Sciatic nerve (tissue), 2 donors: ENCODE measurements at regions of chr7 and their contacts with region 1.

Region 1: GRCh38 chr7:73667344-73668102 is at the start of gene VPS37D:
- DNase-seq: peak; percentile 96
- ATAC-seq: peak; percentile 96
- total RNA-seq, gene VPS37D: 4.5 TPM

Region 2: GRCh38 chr7:73612598-73613269 is 54.8 kb before region 1 on chr7:
- intact Hi-C with region 1: loop called (anchors 5 kb)
- DNase-seq: no peak
- ATAC-seq: peak; percentile 19

Region 3: DNA sequence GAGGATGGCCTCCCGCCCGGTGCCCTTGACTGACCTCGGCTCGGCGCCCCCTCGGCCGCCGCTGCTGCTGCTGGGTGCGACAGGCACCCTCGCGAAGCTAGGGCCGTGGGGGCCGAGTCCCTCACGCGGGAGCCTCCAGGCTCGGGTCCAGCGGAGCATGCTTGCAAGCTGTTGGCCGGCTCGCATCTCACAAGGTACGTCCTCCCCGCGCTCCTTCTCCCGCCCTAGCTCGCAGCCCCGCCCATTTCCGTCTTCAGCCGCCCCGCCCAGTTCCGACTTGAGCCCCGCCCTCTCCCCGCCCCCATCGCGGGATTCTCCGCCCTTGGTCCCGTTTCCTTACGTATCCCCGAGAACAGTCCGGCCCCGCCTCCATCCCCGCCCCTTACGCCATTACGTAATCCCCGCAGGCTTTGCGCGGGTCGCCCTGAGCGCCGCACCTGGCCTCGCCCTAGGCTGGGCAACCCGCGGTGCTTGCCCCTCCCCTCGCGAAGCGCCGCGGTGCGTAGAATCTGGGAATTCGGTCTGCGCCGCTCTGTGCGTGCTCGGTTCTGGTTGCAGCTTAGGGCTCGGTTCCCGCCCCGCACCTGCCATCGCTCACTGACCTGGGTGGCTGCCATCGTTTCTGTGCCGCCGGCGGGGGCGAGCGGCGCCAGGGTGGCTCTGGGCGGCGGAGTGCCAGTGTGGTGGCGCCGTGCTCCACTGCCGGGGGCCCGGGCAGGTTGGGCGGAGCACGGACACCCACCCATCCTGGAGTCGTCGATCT is 71.3 kb after region 1 on chr7 and contains the start of gene ABHD11:
- intact Hi-C with region 1: loop called (anchors 10 kb)
- DNase-seq: peak; percentile 100
- ATAC-seq: peak; percentile 96
- total RNA-seq, gene ABHD11: 10.7 TPM

Region 4: GRCh38 chr7:73899731-73900142 is 232.2 kb after region 1 on chr7:
- intact Hi-C with region 1: no loop called
- DNase-seq: peak; percentile 87
- ATAC-seq: peak; percentile 86